ENCODE measurements at regions of chr7 and their contacts with region 1.

Region 1: GRCh38 chr7:36784991-36785940 is 61.0 kb upstream of the AOAH start:
- DNase-seq: peak; percentile 55 to 97 (median 76)
- ATAC-seq: peak; percentile 76
- H3K4me3 ChIP-seq: peak overlapping the region in 1 of 2 experiments; percentile 5
- H3K4me3 Mint-ChIP-seq: peak overlapping the region; percentile 46
- H3K27ac ChIP-seq: peak overlapping the region; percentile 67 to 87
- H3K27ac Mint-ChIP-seq: peak overlapping the region; percentile 99
- H3K4me1 ChIP-seq: peaks cover 84% of the 10 kb centered on the region
- H3K4me1 Mint-ChIP-seq: peaks cover 89% of the 10 kb centered on the region
- H3K27me3 ChIP-seq: no peaks in the 10 kb centered on the region
- H3K27me3 Mint-ChIP-seq: no peaks in the 10 kb centered on the region
- CTCF ChIP-seq: no peak

Region 2: GRCh38 chr7:36802459-36803135 is 17.3 kb after region 1 on chr7:
- CTCF ChIA-PET with region 1: no interaction called
- POLR2A ChIA-PET with region 1: interaction called, 3 read pairs
- intact Hi-C with region 1: loop called in 1 of 2 experiments (anchors 2 kb)
- DNase-seq: no peak
- ATAC-seq: no peak
- H3K4me3 ChIP-seq: no peak overlapping the region
- H3K4me3 Mint-ChIP-seq: no peak overlapping the region
- H3K27ac ChIP-seq: no peak overlapping the region
- H3K27ac Mint-ChIP-seq: no peak overlapping the region
- H3K4me1 ChIP-seq: no peaks in the 10 kb centered on the region
- H3K4me1 Mint-ChIP-seq: peaks cover 4% of the 10 kb centered on the region
- H3K27me3 ChIP-seq: no peaks in the 10 kb centered on the region
- H3K27me3 Mint-ChIP-seq: no peaks in the 10 kb centered on the region
- CTCF ChIP-seq: no peak

Region 3: DNA sequence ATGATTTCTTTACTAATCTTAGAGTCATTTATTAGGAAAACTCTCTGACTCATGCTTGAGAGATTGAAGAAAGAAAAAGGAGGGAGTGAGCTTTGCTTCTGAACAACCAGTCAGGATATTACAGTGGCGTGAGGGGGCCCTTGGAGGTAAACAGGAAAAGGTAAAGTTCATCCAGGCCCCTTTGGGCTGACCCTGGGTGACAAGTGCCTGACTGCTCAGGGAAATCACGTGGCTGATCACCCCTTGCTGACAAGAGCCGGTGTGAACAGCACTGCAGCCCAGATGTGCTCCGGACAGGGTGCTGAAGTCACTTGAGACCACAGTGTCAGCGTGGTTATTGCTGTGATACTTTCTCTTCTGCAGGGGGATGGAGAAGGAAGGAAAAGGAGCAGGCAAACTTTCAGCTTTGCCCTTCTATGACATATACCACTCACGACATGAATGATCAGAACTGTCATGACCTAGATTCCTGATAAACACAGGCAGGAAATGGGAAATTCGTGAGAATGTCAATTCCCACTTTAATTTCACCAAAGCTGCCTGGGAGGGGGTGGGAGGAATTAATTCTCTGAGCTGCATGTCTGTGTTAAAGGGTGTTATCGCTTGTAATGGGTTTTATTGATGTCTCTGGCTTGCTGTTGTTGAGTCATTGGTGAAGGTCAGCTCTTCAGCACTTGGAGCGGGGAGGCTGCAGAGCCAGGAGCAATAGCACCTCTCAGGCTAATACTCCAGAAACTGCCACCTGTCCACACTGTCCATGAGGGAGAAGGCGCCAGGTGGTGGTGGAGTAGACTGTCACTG is 78.8 kb after region 1 on chr7:
- CTCF ChIA-PET with region 1: no interaction called
- POLR2A ChIA-PET with region 1: no interaction called
- intact Hi-C with region 1: loop called in 1 of 2 experiments (anchors 5 kb)
- DNase-seq: peak; percentile 2 to 82 (median 43)
- ATAC-seq: peak; percentile 61
- H3K4me3 ChIP-seq: no peak overlapping the region
- H3K4me3 Mint-ChIP-seq: peak overlapping the region; percentile 35
- H3K27ac ChIP-seq: peak overlapping the region; percentile 27 to 65
- H3K27ac Mint-ChIP-seq: peak overlapping the region; percentile 79
- H3K4me1 ChIP-seq: peaks cover 8% of the 10 kb centered on the region
- H3K4me1 Mint-ChIP-seq: peaks cover 38% of the 10 kb centered on the region
- H3K27me3 ChIP-seq: no peaks in the 10 kb centered on the region
- H3K27me3 Mint-ChIP-seq: no peaks in the 10 kb centered on the region
- CTCF ChIP-seq: no peak

Measured in CD8-positive, alpha-beta T cell (primary cell).